ENCODE measurements at regions of chrX and their contacts with region 1.

Region 1: GRCh38 chrX:30570505-30570904 is 7.1 kb downstream of the TASL start:
- ATAC-seq: no peak
- H3K4me3 ChIP-seq: no peak overlapping the region
- H3K27ac ChIP-seq: no peak overlapping the region
- H3K4me1 ChIP-seq: no peaks in the 10 kb centered on the region

Region 2: DNA sequence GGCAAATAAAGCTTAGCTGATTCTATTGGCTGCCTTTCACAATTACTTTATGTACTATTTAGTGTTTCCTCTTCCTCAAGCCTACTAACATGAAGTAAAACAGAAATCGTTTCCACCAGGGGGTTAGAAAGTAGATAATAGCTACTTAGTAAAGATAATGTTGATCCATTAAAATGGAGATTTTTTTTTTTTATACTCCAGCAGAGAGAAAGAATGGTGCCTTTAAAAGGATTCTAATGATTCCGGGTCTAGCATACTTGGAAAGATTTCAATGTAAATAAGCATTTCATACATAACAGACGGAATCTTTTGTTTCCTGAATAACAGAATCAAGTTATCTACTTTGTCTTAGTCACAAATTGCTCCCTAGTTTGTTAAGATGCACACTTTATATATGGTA is 119.8 kb after region 1 on chrX:
- in situ Hi-C with region 1: loop called in 1 of 9 experiments (anchors 25 kb)
- ATAC-seq: no peak
- H3K4me3 ChIP-seq: no peak overlapping the region
- H3K27ac ChIP-seq: no peak overlapping the region
- H3K4me1 ChIP-seq: no peaks in the 10 kb centered on the region

Region 3: GRCh38 chrX:30713061-30713525 is 142.6 kb after region 1 on chrX:
- in situ Hi-C with region 1: loop called in 1 of 9 experiments (anchors 25 kb)
- ATAC-seq: peak in 4 of 8 experiments; percentile 47 to 67 (median 64)
- H3K4me3 ChIP-seq: no peak overlapping the region
- H3K27ac ChIP-seq: no peak overlapping the region
- H3K4me1 ChIP-seq: no peaks in the 10 kb centered on the region